Psoas muscle (tissue), 8 donors: ENCODE measurements at regions of chr9 and their contacts with region 1.

Region 1: GRCh38 chr9:13508681-13509080 is 229.2 kb upstream of the MPDZ start:
- DNase-seq: no peak
- ATAC-seq: no peak
- H3K4me3 ChIP-seq: no peak overlapping the region
- H3K27ac ChIP-seq: no peak overlapping the region
- H3K4me1 ChIP-seq: no peaks in the 10 kb centered on the region
- H3K27me3 ChIP-seq: no peaks in the 10 kb centered on the region
- CTCF ChIP-seq: no peak

Region 2: GRCh38 chr9:12538842-12539579 is 969.7 kb before region 1 on chr9:
- intact Hi-C with region 1: no loop called
- DNase-seq: no peak
- ATAC-seq: no peak
- H3K4me3 ChIP-seq: no peak overlapping the region
- H3K27ac ChIP-seq: no peak overlapping the region
- H3K4me1 ChIP-seq: no peaks in the 10 kb centered on the region
- H3K27me3 ChIP-seq: peaks cover 0 to 4% (median 0%) of the 10 kb centered on the region in 3 donors
- CTCF ChIP-seq: no peak

Region 3: GRCh38 chr9:13386935-13387733 is 121.5 kb before region 1 on chr9:
- intact Hi-C with region 1: no loop called
- DNase-seq: no peak
- ATAC-seq: peak; percentile 34 to 58 (median 53)
- H3K4me3 ChIP-seq: no peak overlapping the region
- H3K27ac ChIP-seq: peak overlapping the region; percentile 50
- H3K4me1 ChIP-seq: no peaks in the 10 kb centered on the region
- H3K27me3 ChIP-seq: no peaks in the 10 kb centered on the region
- CTCF ChIP-seq: no peak

Region 4: GRCh38 chr9:13557746-13558145 is 49.1 kb after region 1 on chr9:
- intact Hi-C with region 1: loop called in 1 of 2 experiments (anchors 5 kb)
- DNase-seq: no peak
- ATAC-seq: peak in 3 of 4 donors; percentile 40 to 63 (median 57)
- H3K4me3 ChIP-seq: no peak overlapping the region
- H3K27ac ChIP-seq: no peak overlapping the region
- H3K4me1 ChIP-seq: peaks cover 4% of the 10 kb centered on the region
- H3K27me3 ChIP-seq: no peaks in the 10 kb centered on the region
- CTCF ChIP-seq: no peak

Region 5: GRCh38 chr9:13621872-13622564 is 113.3 kb after region 1 on chr9:
- intact Hi-C with region 1: no loop called
- DNase-seq: no peak
- ATAC-seq: peak in 2 of 4 donors; percentile 58 to 79
- H3K4me3 ChIP-seq: no peak overlapping the region
- H3K27ac ChIP-seq: no peak overlapping the region
- H3K4me1 ChIP-seq: peaks cover 19% of the 10 kb centered on the region
- H3K27me3 ChIP-seq: no peaks in the 10 kb centered on the region
- CTCF ChIP-seq: no peak